ENCODE measurements at regions of chr9 and their contacts with region 1.

Region 1: GRCh38 chr9:124040935-124041816 is 29.6 kb downstream of the LHX2 start:
- DNase-seq: peak; percentile 80
- ATAC-seq: peak; percentile 69

Region 2: DNA sequence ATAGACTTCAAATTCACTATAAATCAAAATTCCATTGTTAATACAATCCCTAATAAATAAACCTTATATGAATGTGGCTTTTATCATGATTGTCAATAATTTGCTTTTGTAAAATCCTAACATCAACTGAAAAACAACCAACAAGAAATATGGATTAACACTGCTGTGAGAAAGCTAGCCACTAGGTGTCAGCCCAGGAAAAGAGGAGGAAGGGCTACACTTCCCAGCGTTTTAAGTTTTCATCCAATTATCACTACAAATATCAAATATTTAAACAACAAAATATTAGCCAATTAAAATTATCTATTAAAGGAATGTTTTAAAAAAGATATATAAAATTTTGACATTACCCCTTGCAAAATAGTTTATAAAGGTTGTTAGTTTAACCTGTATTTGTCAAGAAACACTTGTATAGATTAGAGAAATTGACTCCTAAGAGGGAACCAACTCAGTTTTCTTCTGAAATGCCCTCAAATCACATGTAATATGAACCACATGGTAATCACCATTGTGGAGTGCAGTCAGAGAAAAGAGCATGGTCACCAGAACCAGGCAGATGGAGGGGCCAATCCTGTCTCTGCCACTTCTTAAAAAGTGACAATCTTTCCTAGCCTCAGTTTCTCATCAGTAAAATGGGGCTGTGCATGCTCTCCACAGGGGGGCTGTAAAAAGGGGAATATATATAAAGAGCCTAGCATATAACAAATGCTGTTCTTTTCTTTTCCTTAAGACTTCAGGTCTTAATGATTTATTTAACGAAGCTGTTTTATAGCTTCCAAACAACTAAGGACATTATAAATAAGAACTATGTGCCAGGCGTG is 497.0 kb before region 1 on chr9:
- intact Hi-C with region 1: loop called (anchors 5 kb)
- DNase-seq: no peak
- ATAC-seq: peak; percentile 52

Region 3: DNA sequence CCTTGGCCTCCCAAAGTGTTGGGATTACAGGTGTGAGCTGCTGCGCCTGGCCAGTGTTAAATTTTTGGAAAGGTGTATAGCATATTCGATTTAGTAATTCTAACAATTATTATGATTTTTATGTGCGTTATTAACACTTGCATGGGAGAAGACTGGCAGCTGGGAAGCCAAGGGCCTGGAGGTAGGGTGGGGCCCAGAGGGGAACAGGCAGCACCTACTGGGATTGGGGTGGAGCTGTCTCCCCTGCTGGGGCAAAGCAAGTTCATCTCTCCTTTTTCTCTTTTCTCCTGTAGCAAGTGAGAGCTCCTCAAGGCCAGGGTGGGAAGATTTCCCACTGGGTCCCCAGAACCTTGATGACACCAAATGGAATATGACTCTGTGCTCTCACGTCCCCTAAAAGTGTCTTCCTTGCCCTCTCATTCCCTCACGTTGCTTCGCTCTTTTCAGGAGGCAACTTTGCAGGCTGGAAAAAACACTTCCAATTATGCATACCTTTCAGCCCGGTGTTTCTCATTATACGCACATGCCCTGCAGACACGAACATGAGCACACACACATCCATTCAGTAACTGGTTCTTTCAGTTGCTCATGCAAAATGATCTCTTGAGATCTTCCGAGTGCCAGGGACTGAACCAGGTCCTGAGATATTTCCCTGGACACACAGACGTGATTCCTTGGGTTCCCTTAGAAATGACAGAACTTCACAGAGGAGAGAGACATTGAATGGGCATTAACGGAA is 52.7 kb before region 1 on chr9:
- intact Hi-C with region 1: no loop called
- DNase-seq: no peak
- ATAC-seq: no peak

Region 4: GRCh38 chr9:124513376-124513994 is 472.3 kb after region 1 on chr9:
- intact Hi-C with region 1: no loop called
- DNase-seq: peak; percentile 80
- ATAC-seq: peak; percentile 98